ENCODE measurements at regions of chr2 and their contacts with region 1.

Region 1: GRCh38 chr2:225556461-225556860 is 157.0 kb downstream of the NYAP2 start:
- DNase-seq: no peak
- ATAC-seq: no peak
- H3K4me3 ChIP-seq: no peak overlapping the region
- H3K4me3 Mint-ChIP-seq: no peak overlapping the region
- H3K27ac ChIP-seq: no peak overlapping the region
- H3K27ac Mint-ChIP-seq: no peak overlapping the region
- H3K4me1 ChIP-seq: no peaks in the 10 kb centered on the region
- H3K4me1 Mint-ChIP-seq: no peaks in the 10 kb centered on the region
- H3K27me3 ChIP-seq: no peaks in the 10 kb centered on the region
- H3K27me3 Mint-ChIP-seq: peaks cover 17 to 24% of the 10 kb centered on the region in 2 donors

Region 2: GRCh38 chr2:227106845-227107759 is 1550.6 kb after region 1 on chr2:
- CTCF ChIA-PET with region 1: no interaction called
- POLR2A ChIA-PET with region 1: interaction called in 1 of 2 experiments, 12 read pairs
- DNase-seq: peak in 18 of 35 experiments; percentile 1 to 44 (median 12)
- ATAC-seq: no peak
- H3K4me3 ChIP-seq: no peak overlapping the region
- H3K4me3 Mint-ChIP-seq: no peak overlapping the region
- H3K27ac ChIP-seq: no peak overlapping the region
- H3K27ac Mint-ChIP-seq: no peak overlapping the region
- H3K4me1 ChIP-seq: no peaks in the 10 kb centered on the region
- H3K4me1 Mint-ChIP-seq: no peaks in the 10 kb centered on the region
- H3K27me3 ChIP-seq: peaks cover 0 to 3% of the 10 kb centered on the region in 2 experiments
- H3K27me3 Mint-ChIP-seq: peaks cover 3 to 7% of the 10 kb centered on the region in 2 donors